GM10248 (cell line): ENCODE measurements at regions of chr9 and their contacts with region 1.

Region 1: GRCh38 chr9:129932303-129933151 is 97.3 kb downstream of the USP20 start:
- DNase-seq: no peak
- CTCF ChIP-seq: no peak

Region 2: GRCh38 chr9:130018260-130018659 is 85.7 kb after region 1 on chr9:
- CTCF ChIA-PET with region 1: no interaction called
- POLR2A ChIA-PET with region 1: interaction called, 13 read pairs
- DNase-seq: no peak
- CTCF ChIP-seq: no peak

Region 3: DNA sequence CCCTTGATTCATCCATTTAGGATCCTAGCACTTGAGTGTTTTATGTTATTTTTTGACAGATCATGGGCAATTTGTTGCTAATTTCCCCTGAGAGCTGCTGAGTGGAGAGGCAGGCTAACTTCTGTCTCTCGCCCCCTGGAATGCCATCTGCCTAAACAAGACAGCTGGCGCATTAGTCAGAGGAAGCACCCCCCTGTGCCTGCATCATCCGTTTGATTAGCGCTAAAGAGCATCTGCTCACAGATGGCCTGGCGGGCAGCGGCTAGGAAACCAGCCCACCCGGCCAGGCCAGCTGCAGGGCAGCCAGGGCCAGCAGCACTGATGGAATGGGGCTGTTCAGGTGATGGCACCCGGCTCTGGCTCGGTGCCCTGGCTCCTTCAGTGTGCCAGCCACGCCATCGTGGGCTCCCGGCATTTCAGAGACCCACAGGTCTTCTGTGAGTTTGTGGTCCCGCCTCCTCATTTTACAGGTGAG is 489.3 kb after region 1 on chr9:
- CTCF ChIA-PET with region 1: no interaction called
- POLR2A ChIA-PET with region 1: no interaction called
- DNase-seq: no peak
- CTCF ChIP-seq: no peak